IMR-90 (cell line): ENCODE measurements at regions of chr7 and their contacts with region 1.

Region 1: DNA sequence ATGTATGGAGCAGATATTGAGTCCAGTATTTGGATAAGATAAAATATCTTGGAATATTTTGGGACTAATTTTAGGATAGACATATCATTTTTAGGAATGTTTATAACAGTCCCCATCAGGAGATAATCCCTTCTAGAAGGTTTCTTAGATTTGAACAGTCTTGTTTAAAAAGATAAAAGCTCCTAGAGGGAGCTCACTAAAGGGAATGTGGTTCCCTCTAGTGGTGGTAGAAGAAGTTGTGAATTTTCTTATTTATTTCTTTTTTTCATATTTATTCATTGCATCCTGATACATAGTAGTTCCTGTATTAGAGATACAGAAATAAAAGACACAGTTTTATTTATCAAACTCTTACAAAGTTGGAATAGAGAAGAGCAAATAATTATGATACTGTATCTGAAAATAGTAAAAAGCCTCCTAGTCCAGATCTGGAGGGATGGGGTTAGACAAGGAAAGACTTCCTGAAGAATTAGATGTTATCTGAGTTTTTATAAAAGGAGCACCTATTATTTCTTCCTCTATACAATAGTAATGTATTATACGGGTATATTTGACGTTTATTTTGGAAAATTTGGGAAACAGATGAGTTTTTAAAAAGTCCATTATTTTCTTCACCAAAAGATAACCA is 24.5 kb upstream of the KLF14 start:
- DNase-seq: peak; percentile 69
- ATAC-seq: peak; percentile 82
- H3K4me3 ChIP-seq: no peak overlapping the region
- H3K27ac ChIP-seq: no peak overlapping the region
- H3K4me1 ChIP-seq: no peaks in the 10 kb centered on the region
- H3K27me3 ChIP-seq: peaks cover 20% of the 10 kb centered on the region
- CTCF ChIP-seq: peak; percentile 77
- POLR2A ChIP-seq: no peak
- RAD21 ChIP-seq: peak; percentile 78

Region 2: DNA sequence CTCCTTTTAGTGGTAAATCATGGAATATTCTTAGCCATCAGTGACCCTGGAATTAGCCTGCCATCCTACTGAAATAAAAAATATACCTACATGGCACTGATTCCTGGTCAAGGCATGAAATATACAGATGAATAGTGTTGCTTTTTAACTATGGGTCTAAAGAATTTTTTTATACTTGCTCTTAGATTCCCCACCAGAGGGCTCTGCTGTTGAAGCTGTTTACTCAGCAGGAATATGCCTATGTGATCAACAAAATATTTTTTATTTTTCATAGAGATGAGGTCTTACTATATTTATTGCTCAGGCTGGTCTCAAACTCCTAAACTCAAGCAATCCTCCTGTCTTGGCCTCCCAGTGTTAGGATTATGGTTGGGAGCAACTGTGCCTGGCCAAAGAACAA is 720.8 kb before region 1 on chr7:
- CTCF ChIA-PET with region 1: no interaction called
- POLR2A ChIA-PET with region 1: no interaction called
- dilution Hi-C with region 1: no loop called
- in situ Hi-C with region 1: no loop called
- intact Hi-C with region 1: loop called (anchors 1 kb)
- DNase-seq: peak; percentile 20
- ATAC-seq: peak; percentile 53; the same call in 1 of the 2 replicates
- H3K4me3 ChIP-seq: no peak overlapping the region
- H3K27ac ChIP-seq: no peak overlapping the region
- H3K4me1 ChIP-seq: no peaks in the 10 kb centered on the region
- H3K27me3 ChIP-seq: no peaks in the 10 kb centered on the region
- CTCF ChIP-seq: peak; percentile 41
- POLR2A ChIP-seq: no peak
- RAD21 ChIP-seq: no peak

Region 3: DNA sequence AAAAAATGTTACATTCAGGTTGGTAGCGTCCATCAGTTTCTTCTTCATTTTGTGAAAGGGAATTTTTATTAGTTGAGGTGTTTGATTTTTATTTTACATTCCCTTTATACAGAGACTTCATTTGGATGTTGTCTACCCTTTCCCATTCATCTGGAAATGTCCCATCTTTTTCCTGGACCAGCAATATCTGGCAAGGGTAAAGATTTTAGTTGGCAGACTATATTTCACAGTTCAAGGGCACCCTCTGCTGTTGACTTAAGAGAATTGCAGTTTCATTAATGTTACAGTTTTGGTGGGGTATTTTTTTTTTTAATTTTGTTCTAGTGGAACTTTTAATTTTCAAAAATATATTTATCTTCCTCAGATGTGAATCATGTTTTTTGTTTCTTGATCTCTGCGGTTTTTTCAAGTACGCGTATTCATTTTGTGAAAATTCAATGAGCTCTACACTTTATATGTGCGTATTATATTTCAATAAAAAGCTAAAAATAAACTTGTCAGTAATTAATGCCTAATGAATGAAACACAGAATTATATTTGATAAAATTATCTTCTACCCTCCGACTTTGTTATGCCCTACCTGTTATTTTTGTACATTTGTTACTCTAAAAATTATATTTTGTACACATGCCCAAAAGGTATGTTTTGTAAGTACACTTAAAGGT is 73.4 kb after region 1 on chr7:
- CTCF ChIA-PET with region 1: no interaction called
- POLR2A ChIA-PET with region 1: no interaction called
- dilution Hi-C with region 1: no loop called
- in situ Hi-C with region 1: no loop called
- intact Hi-C with region 1: loop called (anchors 5 kb)
- DNase-seq: peak; percentile 67
- ATAC-seq: peak; percentile 66
- H3K4me3 ChIP-seq: no peak overlapping the region
- H3K27ac ChIP-seq: no peak overlapping the region
- H3K4me1 ChIP-seq: peaks cover 2% of the 10 kb centered on the region; the same call in 1 of the 2 replicates
- H3K27me3 ChIP-seq: no peaks in the 10 kb centered on the region
- CTCF ChIP-seq: peak; percentile 81
- POLR2A ChIP-seq: no peak
- RAD21 ChIP-seq: peak; percentile 76